ENCODE measurements at regions of chr5 and their contacts with region 1.

Region 1: DNA sequence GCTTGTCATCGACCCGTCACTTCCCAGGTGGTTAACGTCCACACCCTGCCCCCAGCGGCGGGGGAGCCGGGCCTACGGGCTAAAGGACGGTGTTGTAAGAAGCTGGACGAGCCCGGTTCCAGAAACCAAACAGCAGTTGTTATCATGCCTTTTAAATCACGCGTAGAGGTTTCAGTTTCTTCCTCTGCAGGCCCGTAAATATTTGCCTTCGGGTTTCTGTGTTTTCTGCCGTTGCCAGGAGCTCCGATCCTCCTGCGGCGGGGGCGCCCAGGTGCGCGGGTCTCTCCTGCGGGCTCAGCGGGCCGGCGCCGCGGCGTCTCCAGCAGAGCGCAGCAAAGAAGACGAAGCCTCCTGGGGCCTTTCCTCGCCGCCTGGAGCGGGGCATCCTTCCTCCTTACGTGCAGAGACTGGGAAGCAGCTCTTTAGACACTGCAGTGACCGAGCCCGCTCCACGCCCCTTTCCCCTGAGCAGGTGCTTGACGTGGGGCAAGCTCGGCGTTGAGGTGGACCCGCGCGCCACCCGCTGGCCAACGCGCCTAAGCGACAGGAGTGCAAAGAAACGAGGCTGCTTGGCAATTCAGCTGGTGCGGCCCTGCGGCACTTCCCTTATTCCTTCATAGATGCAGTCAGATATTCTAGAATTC is 21.8 kb upstream of the TTC1 start:
- DNase-seq: peak; percentile 38 to 66
- ATAC-seq: peak; percentile 70 to 81
- H3K4me3 ChIP-seq: peak overlapping the region; percentile 45 to 61 (median 48)
- H3K27ac ChIP-seq: no peak overlapping the region
- H3K4me1 ChIP-seq: peaks cover 3 to 8% of the 10 kb centered on the region in 2 donors
- H3K27me3 ChIP-seq: peaks cover 0 to 12% (median 7%) of the 10 kb centered on the region in 3 donors
- CTCF ChIP-seq: peak; percentile 61 to 77 (median 71)
- POLR2A ChIP-seq: no peak

Region 2: DNA sequence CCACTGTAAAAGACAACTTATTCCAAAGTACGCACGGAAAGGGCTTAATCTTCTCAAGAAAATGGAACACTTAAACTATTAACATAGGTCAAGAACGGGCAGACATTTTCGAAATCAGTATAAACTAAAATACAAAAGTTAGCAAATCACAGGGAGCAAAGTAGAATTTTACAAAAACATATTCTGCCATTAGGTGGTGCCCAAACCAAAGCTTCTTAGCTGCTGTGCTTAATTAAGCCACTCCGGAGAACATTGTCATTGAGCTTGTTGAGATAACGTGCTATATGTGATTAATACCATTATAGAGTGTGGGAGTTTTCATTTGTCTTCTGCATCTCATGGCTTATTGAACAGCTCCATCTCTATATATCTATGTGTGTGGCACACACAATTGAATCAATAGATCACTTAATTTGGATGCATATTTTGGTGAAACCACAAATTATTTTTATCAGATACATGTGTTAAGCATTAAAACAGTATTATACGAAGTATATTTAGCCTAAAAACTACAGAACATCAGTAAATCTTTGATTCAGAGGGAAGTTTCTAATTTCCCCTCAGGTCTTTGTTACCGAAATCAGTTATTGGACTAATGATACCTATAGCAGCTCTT is 700.6 kb before region 1 on chr5:
- in situ Hi-C with region 1: loop called in 2 of 4 experiments (anchors 25 kb)
- intact Hi-C with region 1: loop called (anchors 5 kb)
- DNase-seq: no peak
- ATAC-seq: no peak
- H3K4me3 ChIP-seq: no peak overlapping the region
- H3K27ac ChIP-seq: no peak overlapping the region
- H3K4me1 ChIP-seq: no peaks in the 10 kb centered on the region
- H3K27me3 ChIP-seq: no peaks in the 10 kb centered on the region
- CTCF ChIP-seq: peak in 2 of 5 experiments; percentile 18 to 33
- POLR2A ChIP-seq: no peak

Region 3: DNA sequence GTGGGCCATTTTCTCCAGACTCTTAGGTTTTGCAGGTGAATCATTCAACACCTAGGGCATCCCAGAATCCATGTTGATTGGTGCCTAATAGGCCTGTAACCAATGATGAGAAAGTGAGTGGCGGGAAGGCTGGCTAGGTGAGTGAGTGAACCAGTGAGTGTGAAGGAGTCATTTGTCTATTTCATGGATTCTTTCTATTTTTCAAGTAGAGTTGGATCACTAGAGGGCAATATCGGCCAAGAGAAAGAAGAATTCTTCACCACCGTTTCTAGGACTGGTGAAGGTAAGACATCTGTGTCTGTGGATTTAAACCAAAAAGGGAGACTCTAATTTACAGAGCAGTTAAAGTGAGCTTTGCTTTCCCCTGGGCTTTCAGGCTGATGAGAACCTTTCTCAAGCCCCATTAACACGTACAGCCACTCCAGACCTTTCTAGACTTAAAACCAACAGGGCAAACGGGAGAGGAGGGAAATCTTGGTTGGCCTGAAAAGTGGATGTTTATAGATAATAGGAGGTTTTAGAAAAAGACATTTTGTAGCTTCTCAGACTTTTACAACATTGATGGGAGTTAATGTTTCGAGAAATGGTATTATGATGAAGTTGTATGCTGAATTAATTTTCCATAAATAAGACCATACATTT is 542.6 kb before region 1 on chr5:
- in situ Hi-C with region 1: loop called in 2 of 4 experiments (anchors 5 to 10 kb)
- intact Hi-C with region 1: loop called (anchors 5 kb)
- DNase-seq: no peak
- ATAC-seq: peak; percentile 39 to 58
- H3K4me3 ChIP-seq: no peak overlapping the region
- H3K27ac ChIP-seq: no peak overlapping the region
- H3K4me1 ChIP-seq: no peaks in the 10 kb centered on the region
- H3K27me3 ChIP-seq: no peaks in the 10 kb centered on the region
- CTCF ChIP-seq: peak in 2 of 5 experiments; percentile 32 to 39
- POLR2A ChIP-seq: no peak

Region 4: DNA sequence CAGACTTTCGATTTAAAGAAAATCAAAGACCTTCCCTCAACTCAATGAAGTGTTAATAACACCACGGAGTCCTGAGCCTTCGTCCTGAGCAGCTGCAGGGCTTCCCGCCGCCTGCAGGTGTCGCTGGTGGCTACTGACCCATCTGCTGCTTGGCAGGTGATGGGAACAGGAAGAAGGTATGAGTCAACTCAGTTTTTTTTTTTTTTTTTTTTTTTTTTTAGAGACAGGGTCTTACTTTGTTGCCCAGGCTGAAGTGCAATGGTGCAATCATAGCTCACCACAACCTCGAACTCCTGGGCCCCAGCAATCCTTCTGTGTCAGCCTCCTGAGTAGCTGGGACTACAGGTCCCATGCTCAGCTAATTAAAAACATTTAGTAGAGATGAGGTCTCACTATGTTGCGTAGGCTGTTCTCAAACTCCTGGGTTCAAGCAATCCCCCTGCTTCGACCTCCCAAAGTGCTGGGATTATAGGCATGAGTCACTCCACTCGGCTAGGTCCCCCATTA is 471.2 kb before region 1 on chr5:
- in situ Hi-C with region 1: no loop called
- intact Hi-C with region 1: loop called (anchors 2 kb)
- DNase-seq: peak in 1 of 2 donors; percentile 61
- ATAC-seq: peak; percentile 52 to 83
- H3K4me3 ChIP-seq: no peak overlapping the region
- H3K27ac ChIP-seq: no peak overlapping the region
- H3K4me1 ChIP-seq: peaks cover 0 to 1% of the 10 kb centered on the region in 2 donors
- H3K27me3 ChIP-seq: no peaks in the 10 kb centered on the region
- CTCF ChIP-seq: peak; percentile 51 to 76 (median 69)
- POLR2A ChIP-seq: no peak

Region 5: DNA sequence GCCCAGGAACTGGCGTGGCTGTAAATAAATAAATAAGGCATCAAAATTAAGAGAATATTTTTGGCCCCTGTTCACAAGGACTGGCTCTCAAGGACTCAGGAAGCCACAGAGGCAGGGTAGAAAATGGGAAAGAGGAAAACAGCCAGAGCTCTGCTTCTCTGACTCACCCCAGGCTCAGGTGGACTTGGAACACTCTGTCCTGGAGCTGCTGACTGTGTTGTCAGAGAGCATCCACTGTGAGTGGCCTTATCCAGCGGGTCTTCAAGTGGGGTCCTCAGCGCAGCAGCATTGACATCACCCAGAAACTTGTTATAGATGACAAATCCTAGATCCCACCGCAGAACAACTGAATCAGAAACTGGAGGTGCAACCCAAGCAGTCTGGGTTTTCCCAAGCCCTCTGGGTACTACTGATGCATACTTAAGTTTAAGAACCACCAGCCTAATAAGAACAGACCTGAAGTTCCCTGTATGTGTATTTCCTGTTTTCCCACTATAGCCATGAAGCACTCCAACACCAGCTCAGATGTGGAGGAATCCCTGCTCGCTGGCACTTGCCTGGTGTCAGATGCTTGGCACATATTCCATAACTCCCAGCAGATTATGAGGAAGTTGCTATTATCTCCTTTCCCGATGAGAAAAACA is 50.3 kb before region 1 on chr5:
- in situ Hi-C with region 1: no loop called
- intact Hi-C with region 1: no loop called
- DNase-seq: no peak
- ATAC-seq: peak; percentile 41 to 82
- H3K4me3 ChIP-seq: no peak overlapping the region
- H3K27ac ChIP-seq: peak overlapping the region in 1 of 4 donors; percentile 26
- H3K4me1 ChIP-seq: no peaks in the 10 kb centered on the region
- H3K27me3 ChIP-seq: no peaks in the 10 kb centered on the region
- CTCF ChIP-seq: no peak
- POLR2A ChIP-seq: no peak